Activated naive CD4-positive, alpha-beta T cell treated with anti-CD3 and anti-CD28 coated beads for 36 hours (primary cell): ENCODE measurements at regions of chr1 and their contacts with region 1.

Region 1: GRCh38 chr1:169106095-169106920 is at the start of gene ATP1B1:
- DNase-seq: peak; percentile 78
- H3K4me3 Mint-ChIP-seq: peak within 1 kb of the TSS; percentile 77
- H3K27ac Mint-ChIP-seq: peak within 1 kb of the TSS; percentile 16
- H3K4me1 Mint-ChIP-seq: peaks cover 43% of the 10 kb centered on the region
- H3K27me3 Mint-ChIP-seq: peaks cover 15% of the 10 kb centered on the region
- total RNA-seq, gene ATP1B1: 5.6 to 6.2 TPM

Region 2: GRCh38 chr1:168637350-168637991 is 468.8 kb before region 1 on chr1:
- CTCF ChIA-PET with region 1: no interaction called
- intact Hi-C with region 1: loop called (anchors 2 kb)
- DNase-seq: peak; percentile 10
- H3K4me3 Mint-ChIP-seq: no peak overlapping the region
- H3K27ac Mint-ChIP-seq: no peak overlapping the region
- H3K4me1 Mint-ChIP-seq: no peaks in the 10 kb centered on the region
- H3K27me3 Mint-ChIP-seq: peaks cover under 1% of the 10 kb centered on the region

Region 3: DNA sequence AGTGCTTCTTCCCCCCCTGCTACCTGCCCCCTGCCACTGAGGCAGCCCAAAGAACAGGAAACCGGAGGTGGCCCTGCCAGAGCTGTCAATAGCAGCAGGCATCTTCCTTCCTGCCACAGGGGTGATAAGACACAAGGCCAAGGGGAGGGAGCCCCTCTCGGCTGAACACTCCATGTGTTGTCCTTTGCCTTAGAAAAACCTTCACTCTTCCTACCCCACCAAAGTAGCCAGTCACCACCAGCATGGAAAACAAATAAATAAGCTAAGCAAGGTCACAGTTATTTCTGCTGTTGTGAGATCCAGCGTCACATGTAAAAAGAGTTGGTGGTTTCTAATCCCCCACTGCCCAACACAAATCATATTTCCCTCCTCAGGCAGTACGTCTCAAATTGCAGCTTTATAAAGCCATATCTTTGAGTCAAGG is 272.5 kb before region 1 on chr1:
- CTCF ChIA-PET with region 1: no interaction called
- intact Hi-C with region 1: loop called (anchors 1 kb)
- DNase-seq: peak; percentile 8
- H3K4me3 Mint-ChIP-seq: no peak overlapping the region
- H3K27ac Mint-ChIP-seq: no peak overlapping the region
- H3K4me1 Mint-ChIP-seq: peaks cover 10% of the 10 kb centered on the region
- H3K27me3 Mint-ChIP-seq: peaks cover 3% of the 10 kb centered on the region

Region 4: GRCh38 chr1:168991667-168992475 is 114.4 kb before region 1 on chr1:
- CTCF ChIA-PET with region 1: no interaction called
- intact Hi-C with region 1: loop called (anchors 1 kb)
- DNase-seq: peak; percentile 64
- H3K4me3 Mint-ChIP-seq: no peak overlapping the region
- H3K27ac Mint-ChIP-seq: peak overlapping the region; percentile 89
- H3K4me1 Mint-ChIP-seq: peaks cover 23% of the 10 kb centered on the region
- H3K27me3 Mint-ChIP-seq: peaks cover 3% of the 10 kb centered on the region

Region 5: GRCh38 chr1:169049258-169049938 is 56.9 kb before region 1 on chr1:
- CTCF ChIA-PET with region 1: interaction called, 3 read pairs
- intact Hi-C with region 1: loop called (anchors 1 kb)
- DNase-seq: peak; percentile 67
- H3K4me3 Mint-ChIP-seq: no peak overlapping the region
- H3K27ac Mint-ChIP-seq: peak overlapping the region; percentile 76
- H3K4me1 Mint-ChIP-seq: peaks cover 61% of the 10 kb centered on the region
- H3K27me3 Mint-ChIP-seq: peaks cover 2% of the 10 kb centered on the region

Region 6: GRCh38 chr1:169138866-169139670 is 32.8 kb after region 1 on chr1:
- CTCF ChIA-PET with region 1: no interaction called
- intact Hi-C with region 1: loop called (anchors 1 kb)
- DNase-seq: no peak
- H3K4me3 Mint-ChIP-seq: no peak overlapping the region
- H3K27ac Mint-ChIP-seq: peak overlapping the region; percentile 50
- H3K4me1 Mint-ChIP-seq: peaks cover 6% of the 10 kb centered on the region
- H3K27me3 Mint-ChIP-seq: no peaks in the 10 kb centered on the region

Region 7: DNA sequence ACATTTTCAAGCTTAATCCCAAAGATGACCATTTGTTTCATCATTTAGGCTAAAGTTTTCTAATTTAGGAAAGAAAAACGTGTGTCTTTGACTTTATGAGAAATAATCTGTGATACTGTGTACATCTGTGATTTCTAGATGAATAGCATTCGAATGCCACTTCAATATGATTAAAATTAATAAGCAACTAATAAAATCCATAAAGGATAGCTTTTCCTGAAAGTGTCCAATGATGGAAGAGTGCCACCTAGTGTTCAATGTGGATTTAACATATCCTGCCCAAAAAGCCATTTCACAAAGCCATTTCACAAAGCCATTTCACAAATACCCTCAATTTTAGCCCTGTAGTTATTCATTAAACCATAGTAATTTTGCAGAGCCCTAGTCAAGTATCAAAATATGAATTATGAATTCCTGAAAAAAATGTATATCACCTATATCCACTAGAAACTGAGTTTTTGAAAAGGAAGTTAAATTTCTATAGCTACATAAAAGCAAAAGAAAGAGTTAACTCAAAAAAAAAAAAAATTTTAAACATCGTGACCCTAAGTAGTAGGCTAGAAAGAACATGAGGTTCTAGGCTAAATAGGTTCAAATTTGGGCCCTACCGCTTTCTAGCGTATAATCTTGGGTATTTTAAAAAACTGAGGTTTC is 242.2 kb after region 1 on chr1:
- CTCF ChIA-PET with region 1: interaction called, 3 read pairs
- intact Hi-C with region 1: loop called (anchors 2 kb)
- DNase-seq: peak; percentile 31
- H3K4me3 Mint-ChIP-seq: no peak overlapping the region
- H3K27ac Mint-ChIP-seq: no peak overlapping the region
- H3K4me1 Mint-ChIP-seq: peaks cover 9% of the 10 kb centered on the region
- H3K27me3 Mint-ChIP-seq: no peaks in the 10 kb centered on the region